ENCODE measurements at regions of chr15 and their contacts with region 1.

Region 1: GRCh38 chr15:75468913-75469598 is 17.6 kb upstream of the SIN3A start:
- DNase-seq: no peak
- H3K4me3 Mint-ChIP-seq: no peak overlapping the region
- H3K27ac Mint-ChIP-seq: no peak overlapping the region
- H3K4me1 Mint-ChIP-seq: no peaks in the 10 kb centered on the region
- H3K27me3 Mint-ChIP-seq: no peaks in the 10 kb centered on the region

Region 2: GRCh38 chr15:77430213-77430612 is 1961.2 kb after region 1 on chr15:
- intact Hi-C with region 1: loop called (anchors 5 kb)
- DNase-seq: no peak
- H3K4me3 Mint-ChIP-seq: no peak overlapping the region
- H3K27ac Mint-ChIP-seq: peak overlapping the region; percentile 30
- H3K4me1 Mint-ChIP-seq: peaks cover 34% of the 10 kb centered on the region
- H3K27me3 Mint-ChIP-seq: no peaks in the 10 kb centered on the region

Measured in activated T-helper 1 cell treated with anti-CD3 and anti-CD28 coated beads, Interleukin-12 subunit alpha, Interleukin-12 subunit beta, Interleukin-2, Interleukin-4 antibody, amounts not matched to agents 30 ng/mL and 10 ng/mL and 1 ng/mL, durations not matched to agents 14 hours and 24 hours and 36 hours (primary cell).